ENCODE measurements at regions of chr5 and their contacts with region 1.

Region 1: GRCh38 chr5:133247881-133248624 is 196.2 kb downstream of the HSPA4 start:
- DNase-seq: peak; percentile 79 to 82
- H3K4me3 ChIP-seq: no peak overlapping the region
- H3K4me3 Mint-ChIP-seq: no peak overlapping the region
- H3K27ac Mint-ChIP-seq: no peak overlapping the region
- H3K4me1 ChIP-seq: no peaks in the 10 kb centered on the region
- H3K4me1 Mint-ChIP-seq: no peaks in the 10 kb centered on the region
- H3K27me3 ChIP-seq: no peaks in the 10 kb centered on the region
- H3K27me3 Mint-ChIP-seq: no peaks in the 10 kb centered on the region
- CTCF ChIP-seq: peak; percentile 87 to 98

Region 2: GRCh38 chr5:132378580-132378979 is 869.5 kb before region 1 on chr5:
- CTCF ChIA-PET with region 1: no interaction called
- POLR2A ChIA-PET with region 1: no interaction called
- intact Hi-C with region 1: no loop called
- DNase-seq: no peak
- H3K4me3 ChIP-seq: no peak overlapping the region
- H3K4me3 Mint-ChIP-seq: no peak overlapping the region
- H3K27ac Mint-ChIP-seq: no peak overlapping the region
- H3K4me1 ChIP-seq: peaks cover 4% of the 10 kb centered on the region; the same call in 1 of the 2 replicates
- H3K4me1 Mint-ChIP-seq: peaks cover 8% of the 10 kb centered on the region
- H3K27me3 ChIP-seq: no peaks in the 10 kb centered on the region
- H3K27me3 Mint-ChIP-seq: no peaks in the 10 kb centered on the region
- CTCF ChIP-seq: no peak

Region 3: DNA sequence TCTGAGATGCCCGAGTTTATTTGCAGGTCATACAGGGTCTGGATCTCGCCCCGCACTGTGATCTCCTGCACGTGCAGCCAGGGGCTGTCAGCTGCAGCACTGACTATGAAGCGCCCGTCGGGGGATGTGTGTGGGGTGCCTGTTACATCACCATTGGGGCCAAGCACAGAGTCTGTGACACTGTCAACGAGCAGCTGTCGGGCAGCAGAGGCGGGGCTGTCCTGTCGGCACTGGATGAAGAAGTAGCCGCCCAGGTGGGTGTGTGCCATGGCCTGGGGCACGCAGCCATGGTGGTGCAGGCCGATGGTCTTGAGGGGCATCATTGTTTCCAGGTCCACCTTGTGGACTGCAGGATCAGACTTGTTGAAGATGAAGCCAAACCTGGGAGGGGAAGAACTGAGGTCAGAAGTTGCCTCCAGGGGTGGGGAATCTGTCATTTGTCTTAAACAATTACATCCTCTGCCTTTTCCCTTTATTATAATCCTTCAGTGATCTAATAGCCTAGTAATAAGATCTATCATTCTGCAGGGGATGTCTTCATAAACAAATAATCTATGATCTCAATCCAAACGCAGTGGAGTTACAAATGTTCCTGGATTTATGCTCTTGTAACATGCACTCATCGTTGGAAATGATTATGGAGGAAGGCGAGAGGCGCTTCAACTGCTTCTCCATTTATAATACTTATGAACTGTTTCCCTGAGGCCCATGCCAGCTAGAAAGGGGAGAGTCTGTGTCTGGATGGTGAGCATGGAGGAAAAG is 48.5 kb before region 1 on chr5:
- CTCF ChIA-PET with region 1: no interaction called
- POLR2A ChIA-PET with region 1: no interaction called
- intact Hi-C with region 1: loop called (anchors 5 kb)
- DNase-seq: no peak
- H3K4me3 ChIP-seq: no peak overlapping the region
- H3K4me3 Mint-ChIP-seq: no peak overlapping the region
- H3K27ac Mint-ChIP-seq: no peak overlapping the region
- H3K4me1 ChIP-seq: no peaks in the 10 kb centered on the region
- H3K4me1 Mint-ChIP-seq: no peaks in the 10 kb centered on the region
- H3K27me3 ChIP-seq: 0 out of 2 replicates have a peak, but pooled peaks cover 1% of the 10 kb centered on the region
- H3K27me3 Mint-ChIP-seq: peaks cover 13% of the 10 kb centered on the region
- CTCF ChIP-seq: no peak

Region 4: GRCh38 chr5:133261993-133262392 is 13.9 kb after region 1 on chr5:
- CTCF ChIA-PET with region 1: interaction called, 12 read pairs
- POLR2A ChIA-PET with region 1: no interaction called
- intact Hi-C with region 1: no loop called
- DNase-seq: peak in 1 of 2 experiments; percentile 42
- H3K4me3 ChIP-seq: no peak overlapping the region
- H3K4me3 Mint-ChIP-seq: no peak overlapping the region
- H3K27ac Mint-ChIP-seq: no peak overlapping the region
- H3K4me1 ChIP-seq: peaks cover 4% of the 10 kb centered on the region; the same call in 1 of the 2 replicates
- H3K4me1 Mint-ChIP-seq: no peaks in the 10 kb centered on the region
- H3K27me3 ChIP-seq: no peaks in the 10 kb centered on the region
- H3K27me3 Mint-ChIP-seq: no peaks in the 10 kb centered on the region
- CTCF ChIP-seq: peak in 1 of 2 experiments; percentile 44

Measured in Caco-2 (cell line).